KBM-7 (cell line): ENCODE measurements at regions of chr17 and their contacts with region 1.

Region 1: DNA sequence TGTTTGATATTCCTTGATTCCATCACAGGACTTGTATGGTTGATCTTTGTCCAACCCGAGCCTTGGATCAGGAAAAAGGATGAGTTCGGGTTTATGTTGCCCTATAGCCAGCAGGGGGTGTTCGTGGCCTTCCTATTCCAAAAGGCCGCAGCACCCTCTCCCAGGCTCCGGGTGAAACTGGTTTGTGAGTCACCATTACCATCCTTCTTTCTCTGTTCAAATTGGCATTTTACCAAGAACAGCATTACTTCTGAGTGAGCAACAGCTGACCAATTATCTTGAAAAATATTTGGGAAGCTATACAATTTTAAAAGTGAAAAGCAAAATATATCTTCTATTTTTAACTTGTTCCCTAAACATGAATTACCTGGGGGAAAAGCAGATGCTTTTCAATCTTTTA is 24.3 kb upstream of the KRT20 start:
- DNase-seq: peak; percentile 73

Region 2: GRCh38 chr17:41013606-41014005 is 104.3 kb after region 1 on chr17:
- in situ Hi-C with region 1: no loop called
- DNase-seq: no peak

Region 3: DNA sequence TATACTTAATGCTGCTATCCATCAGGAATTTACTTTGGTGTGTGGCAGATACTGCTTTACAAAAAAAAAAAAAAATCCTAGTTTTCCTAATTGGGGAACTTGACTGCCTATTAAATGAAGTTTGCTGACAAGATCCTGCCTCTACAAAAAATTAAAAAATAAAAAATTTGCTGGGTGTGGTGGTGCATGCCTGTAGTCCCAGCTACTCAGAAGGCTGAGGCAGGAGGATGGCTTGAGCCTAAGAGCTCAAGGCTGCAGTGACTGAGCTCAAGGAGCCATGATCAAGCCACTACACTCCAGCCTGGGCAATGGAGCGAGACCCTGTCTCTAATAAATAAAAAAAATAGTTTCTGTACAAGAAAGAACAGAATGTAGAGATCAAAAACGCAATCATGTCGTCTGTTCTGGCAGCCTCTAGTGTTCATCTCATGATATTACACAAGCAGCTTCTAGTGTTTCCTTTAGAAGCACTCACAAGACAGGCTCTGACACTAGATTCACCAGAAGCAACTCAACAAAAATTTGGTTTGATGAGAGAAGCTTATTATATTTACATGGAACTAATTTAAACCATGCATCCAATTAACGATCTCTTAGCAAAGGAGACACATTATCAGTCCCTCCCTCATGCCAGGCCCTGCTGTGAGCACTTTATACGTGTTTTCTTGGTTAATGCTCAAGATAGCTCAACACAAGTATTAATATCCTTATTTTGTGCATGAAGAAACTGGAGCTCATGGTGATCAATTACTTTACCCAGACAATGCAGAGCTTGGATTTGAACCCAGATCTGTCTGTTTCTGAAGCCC is 412.9 kb after region 1 on chr17:
- in situ Hi-C with region 1: loop called (anchors 25 kb)
- DNase-seq: peak; percentile 51

Region 4: GRCh38 chr17:41521574-41522261 is 612.4 kb after region 1 on chr17:
- in situ Hi-C with region 1: loop called (anchors 25 kb)
- DNase-seq: no peak